ENCODE measurements at regions of chr6 and their contacts with region 1.

Region 1: GRCh38 chr6:43143235-43144124 is 27.6 kb upstream of the SRF start:
- DNase-seq: peak; percentile 94 to 97 (median 96)
- H3K4me3 ChIP-seq: no peak overlapping the region
- H3K27ac ChIP-seq: peak overlapping the region in 1 of 2 donors; percentile 61
- H3K4me1 ChIP-seq: peaks cover 4% of the 10 kb centered on the region
- H3K27me3 ChIP-seq: no peaks in the 10 kb centered on the region
- CTCF ChIP-seq: peak; percentile 96 to 99 (median 98)
- EP300 ChIP-seq: no peak
- POLR2A ChIP-seq: no peak

Region 2: DNA sequence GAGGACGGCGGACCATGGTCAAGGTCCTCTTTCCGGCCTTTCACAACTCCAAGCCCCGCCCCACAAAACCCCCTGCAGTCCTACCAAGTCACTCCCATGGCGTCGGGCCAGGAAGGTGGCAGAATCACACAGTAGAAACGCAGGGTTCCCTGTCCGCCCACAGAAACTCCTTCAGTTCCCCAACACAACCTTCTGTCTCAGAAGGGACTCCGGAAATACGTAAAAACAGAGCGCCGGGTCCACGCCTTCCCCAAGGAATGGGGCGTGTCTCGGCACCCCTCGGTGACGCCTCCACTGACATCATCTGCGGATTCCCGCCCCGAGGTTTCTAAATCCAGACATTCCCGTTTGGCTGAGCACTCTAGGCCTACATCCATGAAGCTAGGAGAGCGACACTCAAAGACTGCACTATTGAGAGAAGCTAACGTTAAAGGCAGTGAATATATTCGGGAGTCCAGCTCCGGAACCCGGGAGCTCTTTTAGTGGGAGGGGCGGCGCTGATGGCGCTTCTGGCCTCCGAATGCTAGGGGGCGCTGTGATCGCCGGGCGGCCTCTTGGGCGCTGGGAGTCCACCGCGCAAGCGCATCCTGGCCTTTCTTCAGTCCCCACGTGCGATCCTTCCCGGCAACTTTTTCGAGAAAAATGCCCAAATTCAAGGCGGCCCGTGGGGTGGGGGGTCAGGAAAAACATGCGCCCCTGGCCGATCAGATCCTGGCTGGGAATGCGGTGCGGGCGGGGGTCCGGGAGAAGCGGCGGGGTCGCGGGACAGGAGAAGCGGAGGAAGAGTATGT is 1222.4 kb before region 1 on chr6 and contains the starts of genes BYSL and MED20:
- intact Hi-C with region 1: loop called in 1 of 4 experiments (anchors 10 kb)
- DNase-seq: peak; percentile 91 to 95 (median 93)
- H3K4me3 ChIP-seq: peak within 1 kb of the TSS; percentile 78
- H3K27ac ChIP-seq: peak within 1 kb of the TSS; percentile 90 to 97
- H3K4me1 ChIP-seq: peaks cover 5% of the 10 kb centered on the region
- H3K27me3 ChIP-seq: no peaks in the 10 kb centered on the region
- CTCF ChIP-seq: peak; percentile 97 to 99 (median 98)
- EP300 ChIP-seq: no peak
- POLR2A ChIP-seq: peak; percentile 76
- total RNA-seq, gene BYSL: 4.8 to 29.2 (median 14.8) TPM
- total RNA-seq, gene MED20: 8.4 to 20.0 (median 13.1) TPM

Region 3: GRCh38 chr6:42901536-42901957 is 241.9 kb before region 1 on chr6:
- intact Hi-C with region 1: loop called (anchors 5 to 10 kb)
- DNase-seq: peak; percentile 71 to 80 (median 78)
- H3K4me3 ChIP-seq: no peak overlapping the region
- H3K27ac ChIP-seq: no peak overlapping the region
- H3K4me1 ChIP-seq: no peaks in the 10 kb centered on the region
- H3K27me3 ChIP-seq: no peaks in the 10 kb centered on the region
- CTCF ChIP-seq: peak; percentile 87 to 91 (median 90)
- EP300 ChIP-seq: no peak
- POLR2A ChIP-seq: no peak

Region 4: GRCh38 chr6:43070028-43070632 is 73.3 kb before region 1 on chr6:
- intact Hi-C with region 1: loop called in 3 of 4 experiments (anchors 2 to 5 kb)
- DNase-seq: peak in 2 of 5 donors; percentile 36 to 43
- H3K4me3 ChIP-seq: no peak overlapping the region
- H3K27ac ChIP-seq: no peak overlapping the region
- H3K4me1 ChIP-seq: peaks cover 3% of the 10 kb centered on the region
- H3K27me3 ChIP-seq: no peaks in the 10 kb centered on the region
- CTCF ChIP-seq: peak; percentile 22 to 62 (median 52)
- EP300 ChIP-seq: no peak
- POLR2A ChIP-seq: no peak